BJ (cell line): ENCODE measurements at regions of chr1 and their contacts with region 1.

Region 1: DNA sequence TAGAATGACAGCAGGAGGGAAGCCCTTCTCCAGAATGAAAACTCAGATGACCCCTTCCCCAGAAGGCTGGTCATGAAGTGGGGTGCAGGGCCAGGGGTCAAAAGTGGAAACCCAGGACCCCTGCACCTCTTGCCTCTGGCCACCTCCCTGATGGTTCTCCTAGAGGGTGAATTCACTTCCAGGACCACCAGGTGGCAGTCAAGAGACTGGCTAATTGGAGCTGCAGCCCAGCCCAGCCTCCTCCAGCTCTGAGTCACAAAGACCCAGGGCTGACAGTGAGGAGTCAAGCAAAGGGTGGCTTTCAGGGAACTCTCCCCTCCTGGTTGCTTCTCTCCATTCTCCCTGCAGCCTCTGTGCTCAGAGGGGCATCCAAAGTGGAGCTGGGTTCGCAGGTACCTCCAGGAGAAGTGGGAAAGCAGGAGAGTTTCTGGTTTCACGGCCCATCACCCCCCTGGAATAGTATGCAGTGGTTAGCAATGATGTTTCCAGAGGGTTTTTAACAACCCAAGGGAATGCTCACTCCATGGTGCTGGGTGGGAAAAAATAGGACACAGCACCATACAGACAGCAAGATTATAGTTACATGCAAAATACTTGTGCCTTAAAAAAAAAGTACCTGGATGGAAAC is 6.1 kb upstream of the EPHB2 start:
- DNase-seq: peak; percentile 17
- H3K4me3 ChIP-seq: no peak overlapping the region
- H3K27me3 ChIP-seq: 0 out of 2 replicates have a peak, but pooled peaks cover 2% of the 10 kb centered on the region
- CTCF ChIP-seq: peak; percentile 93

Region 2: GRCh38 chr1:22673486-22674409 is 30.8 kb before region 1 on chr1:
- CTCF ChIA-PET with region 1: interaction called, 44 read pairs
- POLR2A ChIA-PET with region 1: no interaction called
- DNase-seq: no peak
- H3K4me3 ChIP-seq: no peak overlapping the region
- H3K27me3 ChIP-seq: peaks cover 28% of the 10 kb centered on the region
- CTCF ChIP-seq: peak; percentile 79

Region 3: DNA sequence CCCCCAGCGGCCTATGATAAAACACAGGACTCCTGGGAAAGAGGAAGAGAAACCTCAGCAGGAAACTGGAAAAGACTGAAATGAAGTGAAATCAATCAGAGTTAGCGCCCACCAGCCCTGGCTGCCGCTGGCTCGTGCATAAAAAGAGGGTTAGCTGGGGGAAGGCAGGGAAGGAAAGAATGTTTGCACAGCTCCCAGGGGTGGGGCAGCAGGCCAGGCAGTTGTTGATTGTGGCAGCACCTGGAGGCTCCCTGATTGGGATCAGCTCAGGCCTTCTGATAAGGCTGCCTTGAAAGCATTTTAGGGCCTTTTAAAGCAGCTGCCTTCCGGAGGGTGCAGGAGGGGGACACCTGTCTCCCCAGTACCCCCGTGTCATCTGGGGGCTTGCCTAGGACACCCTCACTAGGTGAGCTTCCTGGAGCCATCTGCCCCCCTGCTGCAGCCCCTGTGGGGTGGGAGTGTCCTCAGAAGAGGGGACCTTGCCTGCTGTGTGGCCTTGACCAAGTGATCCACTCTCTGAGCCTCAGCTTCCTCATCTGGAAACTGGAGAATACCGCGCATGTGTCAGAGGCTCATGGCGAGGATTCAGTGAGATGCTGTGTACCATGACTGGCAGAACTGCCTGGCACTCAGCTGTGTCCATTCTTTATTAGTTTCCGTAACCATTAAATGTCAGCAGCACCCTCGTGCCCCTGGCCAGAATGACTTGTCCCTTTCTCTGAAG is 12.6 kb after region 1 on chr1:
- CTCF ChIA-PET with region 1: interaction called, 24 read pairs
- POLR2A ChIA-PET with region 1: no interaction called
- DNase-seq: no peak
- H3K4me3 ChIP-seq: no peak overlapping the region
- H3K27me3 ChIP-seq: no peaks in the 10 kb centered on the region
- CTCF ChIP-seq: no peak

Region 4: GRCh38 chr1:22776035-22776613 is 71.6 kb after region 1 on chr1:
- CTCF ChIA-PET with region 1: interaction called, 11 read pairs
- POLR2A ChIA-PET with region 1: no interaction called
- DNase-seq: no peak
- H3K4me3 ChIP-seq: no peak overlapping the region
- H3K27me3 ChIP-seq: no peaks in the 10 kb centered on the region
- CTCF ChIP-seq: no peak

Region 5: GRCh38 chr1:22861764-22862440 is 157.3 kb after region 1 on chr1:
- CTCF ChIA-PET with region 1: interaction called, 182 read pairs
- POLR2A ChIA-PET with region 1: interaction called, 3 read pairs
- DNase-seq: no peak
- H3K4me3 ChIP-seq: no peak overlapping the region
- H3K27me3 ChIP-seq: no peaks in the 10 kb centered on the region
- CTCF ChIP-seq: peak; percentile 95

Region 6: DNA sequence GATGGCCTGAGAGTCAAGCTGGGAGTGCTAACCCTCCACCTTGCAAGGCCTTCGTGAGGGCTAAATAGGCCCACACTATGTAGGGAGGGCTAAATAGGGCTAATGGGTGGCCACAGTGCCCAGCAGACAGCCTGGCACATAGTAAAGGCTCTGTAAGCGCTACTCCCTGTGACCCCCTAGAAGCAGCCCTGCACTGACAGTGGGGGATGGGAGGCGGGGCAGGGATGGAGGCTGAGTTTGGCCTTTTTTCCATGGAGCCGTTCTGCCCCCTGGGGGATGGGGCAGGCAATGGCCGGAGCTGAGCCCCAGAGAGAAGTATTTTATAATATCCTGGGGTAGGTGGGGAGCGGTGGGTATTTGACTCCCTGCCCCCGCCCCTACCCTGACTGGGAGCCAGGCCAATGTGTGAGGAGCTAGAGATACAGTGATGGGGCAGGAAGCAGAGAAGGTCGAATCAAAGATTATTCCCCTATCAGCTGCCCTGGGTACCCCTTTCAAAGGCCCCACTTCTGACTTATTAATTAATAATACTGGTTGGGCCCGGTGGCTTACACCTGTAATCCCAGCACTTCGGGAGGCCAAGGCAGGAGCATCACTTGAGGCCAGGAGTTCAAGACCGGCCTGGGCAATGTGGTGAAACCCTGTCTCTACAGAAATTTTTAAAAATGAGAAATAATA is 225.8 kb after region 1 on chr1:
- CTCF ChIA-PET with region 1: interaction called, 77 read pairs
- POLR2A ChIA-PET with region 1: no interaction called
- DNase-seq: no peak
- H3K4me3 ChIP-seq: no peak overlapping the region
- H3K27me3 ChIP-seq: peaks cover 11% of the 10 kb centered on the region
- CTCF ChIP-seq: peak; percentile 91